T-cell (primary cell): ENCODE measurements at regions of chr6 and their contacts with region 1.

Region 1: DNA sequence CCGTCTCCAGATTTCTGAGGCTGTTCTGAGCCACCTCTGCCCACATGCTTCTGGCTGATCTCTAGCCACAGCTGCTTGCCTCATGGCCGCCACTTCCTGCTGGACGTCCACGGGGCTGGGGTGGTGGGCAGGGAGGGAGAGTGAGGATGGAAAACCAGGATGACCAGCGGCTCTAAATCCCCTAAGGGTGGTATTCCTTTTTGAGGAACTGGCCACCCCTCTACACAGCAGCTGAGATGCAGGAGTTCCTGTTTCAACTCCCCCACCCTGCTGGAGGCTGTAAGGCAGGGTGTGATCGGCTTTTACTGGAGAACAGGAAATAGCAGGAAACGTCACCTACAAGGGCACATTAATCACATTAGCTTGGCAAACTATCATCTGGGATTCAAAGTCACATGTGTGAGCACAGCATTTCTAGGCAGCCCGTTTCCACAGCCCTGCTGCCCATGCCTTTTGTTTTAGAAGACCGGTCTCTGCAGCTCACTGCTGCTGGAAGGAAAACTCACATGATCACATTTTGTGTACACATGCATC is 181.6 kb upstream of the ECI2 start:
- DNase-seq: no peak
- ATAC-seq: no peak
- H3K4me3 ChIP-seq: no peak overlapping the region
- H3K4me3 Mint-ChIP-seq: no peak overlapping the region
- H3K27ac ChIP-seq: no peak overlapping the region
- H3K27ac Mint-ChIP-seq: no peak overlapping the region
- H3K4me1 ChIP-seq: no peaks in the 10 kb centered on the region
- H3K4me1 Mint-ChIP-seq: no peaks in the 10 kb centered on the region
- H3K27me3 ChIP-seq: peaks cover 0 to 7% of the 10 kb centered on the region in 2 experiments
- H3K27me3 Mint-ChIP-seq: peaks cover 19 to 30% of the 10 kb centered on the region in 2 donors

Region 2: DNA sequence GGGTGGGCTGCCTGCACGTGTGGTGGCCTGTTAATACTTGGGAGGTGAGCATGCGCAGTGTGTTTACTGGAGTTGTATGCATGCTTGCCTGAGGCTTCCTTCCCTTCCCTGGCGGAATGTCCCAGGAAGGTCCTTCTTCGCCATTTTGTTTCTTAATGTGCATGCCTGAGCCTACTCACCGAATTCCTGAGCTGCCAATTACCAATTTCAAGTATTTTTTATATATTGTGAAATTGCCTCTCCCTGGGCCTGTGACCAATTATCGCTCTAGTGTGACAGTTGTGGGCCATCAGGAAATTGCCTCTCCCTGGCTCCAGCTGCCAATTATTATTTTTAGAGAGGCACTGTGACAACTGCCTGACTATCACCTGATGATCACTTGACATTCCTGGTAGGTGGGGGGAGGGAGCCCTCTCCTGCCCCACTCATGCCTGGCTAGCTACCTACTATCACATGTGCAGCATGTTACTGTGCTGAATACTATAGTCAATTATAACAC is 397.8 kb before region 1 on chr6:
- CTCF ChIA-PET with region 1: no interaction called
- POLR2A ChIA-PET with region 1: interaction called in 1 of 2 experiments, 11 read pairs
- DNase-seq: no peak
- ATAC-seq: no peak
- H3K4me3 ChIP-seq: no peak overlapping the region
- H3K4me3 Mint-ChIP-seq: no peak overlapping the region
- H3K27ac ChIP-seq: no peak overlapping the region
- H3K27ac Mint-ChIP-seq: no peak overlapping the region
- H3K4me1 ChIP-seq: peaks cover 13 to 19% of the 10 kb centered on the region in 2 experiments
- H3K4me1 Mint-ChIP-seq: peaks cover 22 to 29% (median 29%) of the 10 kb centered on the region in 3 donors
- H3K27me3 ChIP-seq: peaks cover 0 to 5% of the 10 kb centered on the region in 2 experiments
- H3K27me3 Mint-ChIP-seq: peaks cover 3 to 7% of the 10 kb centered on the region in 2 donors

Region 3: GRCh38 chr6:4253604-4254231 is 63.2 kb before region 1 on chr6:
- CTCF ChIA-PET with region 1: no interaction called
- POLR2A ChIA-PET with region 1: no interaction called
- DNase-seq: no peak
- ATAC-seq: no peak
- H3K4me3 ChIP-seq: no peak overlapping the region
- H3K4me3 Mint-ChIP-seq: no peak overlapping the region
- H3K27ac ChIP-seq: no peak overlapping the region
- H3K27ac Mint-ChIP-seq: no peak overlapping the region
- H3K4me1 ChIP-seq: no peaks in the 10 kb centered on the region
- H3K4me1 Mint-ChIP-seq: no peaks in the 10 kb centered on the region
- H3K27me3 ChIP-seq: no peaks in the 10 kb centered on the region
- H3K27me3 Mint-ChIP-seq: peaks cover 11 to 17% of the 10 kb centered on the region in 2 donors

Region 4: GRCh38 chr6:4327841-4328240 is 10.9 kb after region 1 on chr6:
- CTCF ChIA-PET with region 1: no interaction called
- POLR2A ChIA-PET with region 1: no interaction called
- DNase-seq: no peak
- ATAC-seq: no peak
- H3K4me3 ChIP-seq: no peak overlapping the region
- H3K4me3 Mint-ChIP-seq: no peak overlapping the region
- H3K27ac ChIP-seq: no peak overlapping the region
- H3K27ac Mint-ChIP-seq: no peak overlapping the region
- H3K4me1 ChIP-seq: no peaks in the 10 kb centered on the region
- H3K4me1 Mint-ChIP-seq: no peaks in the 10 kb centered on the region
- H3K27me3 ChIP-seq: no peaks in the 10 kb centered on the region
- H3K27me3 Mint-ChIP-seq: peaks cover 8 to 12% of the 10 kb centered on the region in 2 donors

Region 5: GRCh38 chr6:5100806-5101205 is 783.9 kb after region 1 on chr6:
- CTCF ChIA-PET with region 1: no interaction called
- POLR2A ChIA-PET with region 1: no interaction called
- DNase-seq: no peak
- ATAC-seq: no peak
- H3K4me3 ChIP-seq: no peak overlapping the region
- H3K4me3 Mint-ChIP-seq: no peak overlapping the region
- H3K27ac ChIP-seq: no peak overlapping the region
- H3K27ac Mint-ChIP-seq: no peak overlapping the region
- H3K4me1 ChIP-seq: no peaks in the 10 kb centered on the region
- H3K4me1 Mint-ChIP-seq: no peaks in the 10 kb centered on the region
- H3K27me3 ChIP-seq: peaks cover 0 to 4% of the 10 kb centered on the region in 2 experiments
- H3K27me3 Mint-ChIP-seq: peaks cover 0 to 3% of the 10 kb centered on the region in 2 donors

Region 6: DNA sequence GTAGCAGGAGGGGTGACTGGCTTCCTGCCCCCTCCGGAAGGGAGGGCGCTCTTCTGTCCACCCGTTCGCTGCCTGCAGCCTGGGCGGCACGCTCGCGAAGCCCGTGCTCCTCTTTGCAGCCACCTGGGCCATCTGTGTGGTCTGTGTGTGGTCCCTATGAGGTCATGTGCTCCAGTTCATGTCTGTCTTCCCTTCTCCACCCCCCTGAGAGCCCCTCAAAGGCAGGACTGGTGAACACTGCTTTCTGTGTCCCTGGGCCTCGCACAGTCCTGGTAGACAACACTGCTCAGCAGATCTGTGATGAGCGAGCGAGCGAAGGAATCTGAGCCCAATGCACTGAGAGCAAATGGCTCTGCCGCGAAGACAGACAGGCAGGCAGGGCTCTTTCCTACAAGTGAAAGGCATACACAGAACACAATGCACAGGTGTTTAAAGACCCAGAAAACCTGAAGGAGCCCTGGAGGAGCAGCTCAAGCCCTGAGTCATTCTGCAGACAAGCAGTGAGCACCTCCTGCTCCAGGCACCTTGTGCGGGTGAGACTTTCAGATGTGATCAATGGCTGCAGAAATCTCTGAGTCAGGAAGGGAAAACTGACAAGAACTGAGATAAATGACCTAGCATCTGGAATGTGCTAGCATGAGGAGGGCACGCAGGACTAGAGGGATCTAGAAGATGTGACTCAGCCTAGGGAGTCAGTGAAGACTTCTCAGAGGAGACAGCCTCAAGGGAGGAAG is 795.3 kb after region 1 on chr6:
- CTCF ChIA-PET with region 1: no interaction called
- POLR2A ChIA-PET with region 1: no interaction called
- DNase-seq: no peak
- ATAC-seq: no peak
- H3K4me3 ChIP-seq: no peak overlapping the region
- H3K4me3 Mint-ChIP-seq: no peak overlapping the region
- H3K27ac ChIP-seq: no peak overlapping the region
- H3K27ac Mint-ChIP-seq: no peak overlapping the region
- H3K4me1 ChIP-seq: no peaks in the 10 kb centered on the region
- H3K4me1 Mint-ChIP-seq: no peaks in the 10 kb centered on the region
- H3K27me3 ChIP-seq: no peaks in the 10 kb centered on the region
- H3K27me3 Mint-ChIP-seq: no peaks in the 10 kb centered on the region